ENCODE measurements at regions of chr1 and their contacts with region 1.

Region 1: GRCh38 chr1:53182111-53182593 is 14.5 kb upstream of the CPT2 start:
- DNase-seq: peak; percentile 76 to 81 (median 78)
- ATAC-seq: peak; percentile 36 to 64 (median 48)
- H3K4me3 ChIP-seq: no peak overlapping the region
- H3K27ac ChIP-seq: peak overlapping the region; percentile 30 to 73 (median 67)
- H3K4me1 ChIP-seq: peaks cover 0 to 49% (median 19%) of the 10 kb centered on the region in 4 donors
- H3K27me3 ChIP-seq: no peaks in the 10 kb centered on the region
- CTCF ChIP-seq: peak; percentile 77 to 95 (median 86)
- POLR2A ChIP-seq: no peak

Region 2: DNA sequence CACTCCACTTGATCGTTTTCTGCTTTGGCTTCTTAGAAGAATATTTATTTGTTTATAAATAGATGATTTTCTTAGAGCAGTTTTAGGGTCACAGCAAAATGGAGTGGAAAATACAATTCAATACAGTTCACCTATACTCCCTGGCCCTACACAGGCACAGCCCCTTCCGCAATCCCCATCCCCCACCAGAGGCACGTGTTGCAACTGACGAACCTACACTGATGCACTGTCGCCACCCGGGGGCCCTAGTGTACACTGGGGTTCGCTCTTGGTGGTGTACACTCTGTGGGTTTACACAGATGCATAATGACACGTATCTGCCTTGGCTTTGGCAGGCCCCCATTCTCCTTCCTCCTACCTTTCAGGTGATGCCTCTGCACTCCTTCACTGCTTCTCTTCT is 268.6 kb before region 1 on chr1:
- intact Hi-C with region 1: loop called (anchors 10 kb)
- DNase-seq: peak; percentile 57 to 89 (median 69)
- ATAC-seq: peak; percentile 18 to 62 (median 36)
- H3K4me3 ChIP-seq: peak overlapping the region in 1 of 3 donors; percentile 46
- H3K27ac ChIP-seq: peak overlapping the region in 2 of 3 donors; percentile 91 to 97
- H3K4me1 ChIP-seq: peaks cover 0 to 95% (median 32%) of the 10 kb centered on the region in 4 donors
- H3K27me3 ChIP-seq: no peaks in the 10 kb centered on the region
- CTCF ChIP-seq: peak; percentile 9 to 37 (median 18)
- POLR2A ChIP-seq: no peak

Region 3: DNA sequence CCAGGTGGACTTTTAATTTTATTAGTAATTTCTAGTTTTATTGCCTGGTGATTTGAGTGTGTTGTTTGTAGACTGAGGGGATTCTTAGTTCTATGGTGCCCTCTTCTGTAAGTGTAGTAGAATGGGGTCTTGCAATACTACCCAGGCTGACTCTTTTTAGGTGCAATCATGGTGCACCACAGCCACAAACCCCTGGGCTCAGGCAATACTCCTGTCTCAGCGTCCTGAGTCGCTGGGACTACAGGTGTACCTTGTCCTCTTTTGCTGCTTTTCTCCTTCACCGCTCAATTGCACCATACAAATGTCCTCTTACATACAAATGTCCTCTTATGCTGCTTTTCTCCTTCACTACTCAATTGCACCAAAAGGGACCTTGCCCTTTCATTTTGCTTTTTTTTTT is 212.0 kb before region 1 on chr1:
- intact Hi-C with region 1: no loop called
- DNase-seq: no peak
- ATAC-seq: peak; percentile 62 to 85 (median 70)
- H3K4me3 ChIP-seq: no peak overlapping the region
- H3K27ac ChIP-seq: no peak overlapping the region
- H3K4me1 ChIP-seq: no peaks in the 10 kb centered on the region
- H3K27me3 ChIP-seq: no peaks in the 10 kb centered on the region
- CTCF ChIP-seq: peak in 2 of 4 donors; percentile 5 to 18
- POLR2A ChIP-seq: no peak